ENCODE measurements at regions of chr21 and their contacts with region 1.

Region 1: GRCh38 chr21:14259747-14260146 is 43.8 kb downstream of the RBM11 start:
- DNase-seq: peak; percentile 24 to 72 (median 34)
- ATAC-seq: peak; percentile 92
- H3K4me3 ChIP-seq: no peak overlapping the region
- H3K27ac ChIP-seq: no peak overlapping the region
- H3K4me1 ChIP-seq: no peaks in the 10 kb centered on the region; a peak in 1 of 5 replicates
- H3K27me3 ChIP-seq: no peaks in the 10 kb centered on the region
- CTCF ChIP-seq: peak; percentile 48 to 78 (median 63); a peak in 5 of 6 replicates
- EP300 ChIP-seq: no peak
- POLR2A ChIP-seq: no peak
- RAD21 ChIP-seq: peak; percentile 81 to 92

Region 2: GRCh38 chr21:14143999-14144398 is 115.7 kb before region 1 on chr21:
- CTCF ChIA-PET with region 1: no interaction called
- POLR2A ChIA-PET with region 1: no interaction called
- in situ Hi-C with region 1: no loop called
- intact Hi-C with region 1: no loop called
- DNase-seq: no peak
- ATAC-seq: no peak
- H3K4me3 ChIP-seq: no peak overlapping the region
- H3K27ac ChIP-seq: no peak overlapping the region
- H3K4me1 ChIP-seq: no peaks in the 10 kb centered on the region
- H3K27me3 ChIP-seq: no peaks in the 10 kb centered on the region
- CTCF ChIP-seq: no peak
- EP300 ChIP-seq: no peak
- POLR2A ChIP-seq: no peak
- RAD21 ChIP-seq: no peak

Region 3: GRCh38 chr21:14438211-14438610 is 178.5 kb after region 1 on chr21:
- CTCF ChIA-PET with region 1: no interaction called
- POLR2A ChIA-PET with region 1: no interaction called
- in situ Hi-C with region 1: no loop called
- intact Hi-C with region 1: loop called (anchors 10 kb)
- DNase-seq: no peak
- ATAC-seq: no peak
- H3K4me3 ChIP-seq: no peak overlapping the region
- H3K27ac ChIP-seq: no peak overlapping the region
- H3K4me1 ChIP-seq: no peaks in the 10 kb centered on the region
- H3K27me3 ChIP-seq: no peaks in the 10 kb centered on the region
- CTCF ChIP-seq: no peak
- EP300 ChIP-seq: no peak
- POLR2A ChIP-seq: no peak
- RAD21 ChIP-seq: no peak

Region 4: GRCh38 chr21:14722841-14723483 is 463.2 kb after region 1 on chr21:
- CTCF ChIA-PET with region 1: no interaction called
- POLR2A ChIA-PET with region 1: no interaction called
- in situ Hi-C with region 1: no loop called
- intact Hi-C with region 1: no loop called
- DNase-seq: no peak
- ATAC-seq: no peak
- H3K4me3 ChIP-seq: no peak overlapping the region
- H3K27ac ChIP-seq: no peak overlapping the region
- H3K4me1 ChIP-seq: peaks cover 0 to 5% of the 10 kb centered on the region in 2 experiments; a peak in 2 of 5 replicates
- H3K27me3 ChIP-seq: no peaks in the 10 kb centered on the region
- CTCF ChIP-seq: no peak
- EP300 ChIP-seq: no peak
- POLR2A ChIP-seq: no peak
- RAD21 ChIP-seq: no peak

Region 5: DNA sequence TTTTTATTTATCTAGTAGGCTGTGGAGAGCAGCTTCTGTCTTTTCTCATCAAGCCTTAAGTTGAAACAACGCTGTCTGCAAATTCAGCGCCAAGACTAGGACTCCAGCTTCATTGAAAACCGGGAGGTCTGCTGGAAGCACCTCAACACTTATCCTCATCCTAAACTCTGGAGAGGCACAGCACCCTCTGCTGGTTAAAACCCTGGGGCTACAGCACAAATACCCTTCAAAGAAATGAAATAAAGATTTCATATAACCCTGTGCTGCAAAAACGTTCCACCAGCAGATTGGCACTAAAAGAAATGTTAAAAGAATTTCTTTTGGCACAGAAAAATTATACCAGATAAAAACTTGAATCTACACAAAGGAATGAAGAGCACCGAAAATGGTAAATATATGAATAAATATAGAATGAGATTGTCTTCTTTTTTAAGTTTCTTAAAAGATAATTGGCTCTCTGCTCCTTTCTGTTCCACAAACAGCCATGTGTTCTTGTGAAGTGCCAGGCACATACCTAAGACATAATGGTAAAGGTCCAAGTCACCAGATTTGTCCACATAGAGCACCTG is 514.1 kb after region 1 on chr21:
- CTCF ChIA-PET with region 1: no interaction called
- POLR2A ChIA-PET with region 1: no interaction called
- in situ Hi-C with region 1: no loop called
- intact Hi-C with region 1: loop called (anchors 5 kb)
- DNase-seq: peak; percentile 68 to 90 (median 74)
- ATAC-seq: peak; percentile 95
- H3K4me3 ChIP-seq: no peak overlapping the region
- H3K27ac ChIP-seq: no peak overlapping the region; the same call in 2 of the 3 replicates
- H3K4me1 ChIP-seq: peaks cover 0 to 18% of the 10 kb centered on the region in 2 experiments; a peak in 3 of 5 replicates
- H3K27me3 ChIP-seq: no peaks in the 10 kb centered on the region
- CTCF ChIP-seq: peak; percentile 71 to 91 (median 79)
- EP300 ChIP-seq: 0 out of 2 replicates have a peak, but pooled peaks have one; percentile 47
- POLR2A ChIP-seq: no peak
- RAD21 ChIP-seq: peak; percentile 87 to 93

Region 6: DNA sequence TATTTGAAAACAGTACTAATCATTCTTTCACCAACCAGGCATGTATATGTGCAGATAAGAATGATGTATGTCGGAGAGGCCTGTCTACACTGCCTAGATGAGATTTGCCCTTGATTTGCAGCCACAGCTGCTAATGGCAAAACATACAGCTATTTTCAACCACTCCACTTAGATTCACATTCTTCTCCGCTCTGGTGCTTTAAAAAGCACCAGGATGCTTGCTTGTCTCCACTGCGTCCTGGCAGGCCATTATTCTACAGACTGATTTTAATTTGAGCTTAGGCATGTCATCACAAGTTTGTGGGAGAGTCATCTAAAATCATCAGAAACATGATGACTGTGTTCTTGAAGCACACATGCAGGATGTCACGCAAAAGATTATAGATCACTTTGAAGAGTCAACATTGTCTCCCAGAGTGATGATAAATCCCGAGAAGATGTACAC is 924.1 kb after region 1 on chr21:
- CTCF ChIA-PET with region 1: no interaction called
- POLR2A ChIA-PET with region 1: no interaction called
- in situ Hi-C with region 1: no loop called
- intact Hi-C with region 1: no loop called
- DNase-seq: no peak
- ATAC-seq: no peak
- H3K4me3 ChIP-seq: no peak overlapping the region
- H3K27ac ChIP-seq: no peak overlapping the region
- H3K4me1 ChIP-seq: no peaks in the 10 kb centered on the region
- H3K27me3 ChIP-seq: no peaks in the 10 kb centered on the region
- CTCF ChIP-seq: no peak
- EP300 ChIP-seq: no peak
- POLR2A ChIP-seq: no peak
- RAD21 ChIP-seq: no peak

Region 7: DNA sequence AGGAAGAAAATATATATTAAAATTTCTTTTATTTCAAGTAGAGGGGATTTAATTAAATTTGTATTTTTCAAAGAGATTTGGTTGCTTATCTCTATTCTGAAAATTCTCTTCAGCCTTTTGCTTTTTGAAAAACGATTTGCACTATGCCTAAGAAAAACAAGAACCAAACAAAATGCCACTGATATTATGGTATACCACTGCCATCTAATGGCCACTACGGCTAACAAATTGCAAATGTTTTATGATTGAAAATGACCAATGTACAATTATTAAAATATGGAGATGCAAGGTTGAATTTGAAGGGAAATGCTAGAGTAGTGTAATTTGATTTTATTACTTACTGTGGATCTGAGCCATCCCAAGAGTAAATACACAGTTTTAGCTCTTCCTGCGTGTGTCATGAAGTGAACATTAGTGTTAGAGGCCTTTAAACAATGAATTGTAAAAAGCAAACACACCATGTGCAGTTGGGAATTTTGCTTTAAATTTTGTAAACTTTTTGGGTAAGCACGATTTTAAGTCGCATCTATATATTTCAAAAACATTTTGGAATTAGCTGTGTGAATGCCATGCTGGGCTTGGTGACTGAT is 1332.6 kb after region 1 on chr21:
- CTCF ChIA-PET with region 1: no interaction called
- POLR2A ChIA-PET with region 1: no interaction called
- in situ Hi-C with region 1: no loop called
- intact Hi-C with region 1: loop called (anchors 5 kb)
- DNase-seq: peak in 2 of 4 experiments; percentile 17 to 54
- ATAC-seq: no peak
- H3K4me3 ChIP-seq: no peak overlapping the region
- H3K27ac ChIP-seq: no peak overlapping the region
- H3K4me1 ChIP-seq: no peaks in the 10 kb centered on the region
- H3K27me3 ChIP-seq: no peaks in the 10 kb centered on the region
- CTCF ChIP-seq: peak; percentile 8 to 68 (median 30); a peak in 3 of 6 replicates
- EP300 ChIP-seq: no peak
- POLR2A ChIP-seq: no peak
- RAD21 ChIP-seq: peak; percentile 86 to 87

Measured in K562 (cell line).